Calu3 (cell line): ENCODE measurements at regions of chr3 and their contacts with region 1.

Region 1: GRCh38 chr3:42118762-42119361 is 27.7 kb downstream of the TRAK1 start:
- DNase-seq: peak; percentile 78
- H3K4me3 Mint-ChIP-seq: peak overlapping the region; percentile 40
- H3K27ac Mint-ChIP-seq: peak overlapping the region; percentile 96
- H3K4me1 Mint-ChIP-seq: peaks cover 67% of the 10 kb centered on the region
- H3K27me3 Mint-ChIP-seq: no peaks in the 10 kb centered on the region
- CTCF ChIP-seq: peak; percentile 42

Region 2: DNA sequence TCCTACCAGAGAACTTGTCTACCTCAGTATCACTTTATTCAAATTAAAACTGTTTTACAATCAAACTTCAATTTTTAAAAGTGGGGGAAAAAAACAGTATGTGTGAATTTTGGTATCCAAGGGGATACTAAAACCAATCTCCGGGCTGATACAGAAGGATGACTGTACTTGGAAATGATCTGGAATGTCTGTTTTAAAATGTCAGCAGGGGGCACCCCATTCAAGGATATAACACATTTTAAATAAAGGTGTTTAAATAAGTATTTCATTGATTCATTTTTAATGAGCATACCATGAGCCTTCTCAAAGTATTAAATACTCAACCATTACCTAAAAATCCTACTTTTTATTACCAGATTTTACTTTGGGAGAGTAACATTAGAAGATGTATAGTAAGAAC is 224.9 kb before region 1 on chr3:
- CTCF ChIA-PET with region 1: no interaction called
- intact Hi-C with region 1: loop called (anchors 1 kb)
- DNase-seq: peak; percentile 45
- H3K4me3 Mint-ChIP-seq: no peak overlapping the region
- H3K27ac Mint-ChIP-seq: no peak overlapping the region
- H3K4me1 Mint-ChIP-seq: no peaks in the 10 kb centered on the region
- H3K27me3 Mint-ChIP-seq: no peaks in the 10 kb centered on the region
- CTCF ChIP-seq: no peak

Region 3: GRCh38 chr3:42159706-42160472 is 41.0 kb after region 1 on chr3:
- CTCF ChIA-PET with region 1: interaction called, 11 read pairs
- intact Hi-C with region 1: loop called (anchors 5 kb)
- DNase-seq: peak; percentile 88
- H3K4me3 Mint-ChIP-seq: peak overlapping the region; percentile 97
- H3K27ac Mint-ChIP-seq: peak overlapping the region; percentile 43
- H3K4me1 Mint-ChIP-seq: peaks cover 32% of the 10 kb centered on the region
- H3K27me3 Mint-ChIP-seq: no peaks in the 10 kb centered on the region
- CTCF ChIP-seq: no peak

Region 4: GRCh38 chr3:42184651-42185443 is 66.0 kb after region 1 on chr3:
- CTCF ChIA-PET with region 1: interaction called, 119 read pairs
- intact Hi-C with region 1: no loop called
- DNase-seq: no peak
- H3K4me3 Mint-ChIP-seq: peak overlapping the region; percentile 89
- H3K27ac Mint-ChIP-seq: peak overlapping the region; percentile 100
- H3K4me1 Mint-ChIP-seq: peaks cover 59% of the 10 kb centered on the region
- H3K27me3 Mint-ChIP-seq: no peaks in the 10 kb centered on the region
- CTCF ChIP-seq: no peak

Region 5: GRCh38 chr3:42229942-42230688 is 111.3 kb after region 1 on chr3:
- CTCF ChIA-PET with region 1: interaction called, 10 read pairs
- intact Hi-C with region 1: no loop called
- DNase-seq: peak; percentile 49
- H3K4me3 Mint-ChIP-seq: no peak overlapping the region
- H3K27ac Mint-ChIP-seq: no peak overlapping the region
- H3K4me1 Mint-ChIP-seq: no peaks in the 10 kb centered on the region
- H3K27me3 Mint-ChIP-seq: peaks cover 27% of the 10 kb centered on the region
- CTCF ChIP-seq: no peak